ENCODE measurements at regions of chr5 and their contacts with region 1.

Region 1: GRCh38 chr5:53120165-53120564 is 10.6 kb upstream of the MOCS2 start:
- DNase-seq: peak in 2 of 4 experiments; percentile 32 to 55
- ATAC-seq: peak; percentile 69
- H3K4me3 ChIP-seq: no peak overlapping the region
- H3K27ac ChIP-seq: no peak overlapping the region
- H3K4me1 ChIP-seq: peaks cover 16 to 25% of the 10 kb centered on the region in 2 experiments; a peak in 4 of 5 replicates
- H3K27me3 ChIP-seq: no peaks in the 10 kb centered on the region
- CTCF ChIP-seq: no peak
- EP300 ChIP-seq: no peak; the same call in 1 of the 2 replicates
- POLR2A ChIP-seq: no peak
- RAD21 ChIP-seq: no peak

Region 2: DNA sequence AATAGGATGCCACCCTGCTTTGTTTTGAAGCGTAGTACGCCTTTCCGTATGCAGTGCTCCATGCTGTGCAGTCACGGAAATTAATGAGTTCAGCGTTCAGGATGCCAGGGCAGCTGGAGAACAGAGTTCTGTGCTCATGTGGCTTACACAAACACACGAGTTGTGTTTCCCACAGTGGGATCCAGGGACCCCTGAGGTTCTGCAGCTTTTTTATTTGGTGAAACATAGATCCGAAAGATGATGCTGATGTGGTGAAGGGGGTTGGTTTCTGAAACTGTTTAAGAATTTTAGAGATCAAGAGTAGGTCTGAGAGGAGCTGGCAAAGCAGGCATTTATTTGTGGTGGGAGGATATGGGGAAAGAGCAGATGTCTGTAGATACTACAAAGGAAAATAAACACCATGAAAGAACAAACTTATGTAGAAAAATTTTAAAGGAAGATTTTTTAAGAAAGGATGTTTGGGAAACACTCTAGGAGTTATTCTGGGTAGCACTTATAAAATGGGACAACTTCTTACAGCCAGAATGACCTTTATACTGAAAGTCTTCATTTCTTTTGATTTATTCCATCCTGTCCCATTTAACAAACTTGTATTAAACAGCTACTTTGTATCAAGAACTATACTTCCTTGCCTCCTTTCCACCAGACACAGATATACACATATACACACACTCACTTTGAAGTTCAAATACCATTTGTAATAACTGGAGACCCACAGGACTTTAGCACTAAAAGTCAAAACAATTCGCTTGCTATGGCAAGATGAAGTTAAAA is 279.7 kb before region 1 on chr5:
- CTCF ChIA-PET with region 1: no interaction called
- POLR2A ChIA-PET with region 1: no interaction called
- in situ Hi-C with region 1: no loop called
- intact Hi-C with region 1: no loop called
- DNase-seq: no peak
- ATAC-seq: no peak
- H3K4me3 ChIP-seq: no peak overlapping the region
- H3K27ac ChIP-seq: no peak overlapping the region
- H3K4me1 ChIP-seq: no peaks in the 10 kb centered on the region
- H3K27me3 ChIP-seq: 0 out of 5 replicates have a peak, but pooled peaks cover 0 to 2% of the 10 kb centered on the region in 2 experiments
- CTCF ChIP-seq: no peak
- EP300 ChIP-seq: no peak
- POLR2A ChIP-seq: no peak
- RAD21 ChIP-seq: no peak

Region 3: DNA sequence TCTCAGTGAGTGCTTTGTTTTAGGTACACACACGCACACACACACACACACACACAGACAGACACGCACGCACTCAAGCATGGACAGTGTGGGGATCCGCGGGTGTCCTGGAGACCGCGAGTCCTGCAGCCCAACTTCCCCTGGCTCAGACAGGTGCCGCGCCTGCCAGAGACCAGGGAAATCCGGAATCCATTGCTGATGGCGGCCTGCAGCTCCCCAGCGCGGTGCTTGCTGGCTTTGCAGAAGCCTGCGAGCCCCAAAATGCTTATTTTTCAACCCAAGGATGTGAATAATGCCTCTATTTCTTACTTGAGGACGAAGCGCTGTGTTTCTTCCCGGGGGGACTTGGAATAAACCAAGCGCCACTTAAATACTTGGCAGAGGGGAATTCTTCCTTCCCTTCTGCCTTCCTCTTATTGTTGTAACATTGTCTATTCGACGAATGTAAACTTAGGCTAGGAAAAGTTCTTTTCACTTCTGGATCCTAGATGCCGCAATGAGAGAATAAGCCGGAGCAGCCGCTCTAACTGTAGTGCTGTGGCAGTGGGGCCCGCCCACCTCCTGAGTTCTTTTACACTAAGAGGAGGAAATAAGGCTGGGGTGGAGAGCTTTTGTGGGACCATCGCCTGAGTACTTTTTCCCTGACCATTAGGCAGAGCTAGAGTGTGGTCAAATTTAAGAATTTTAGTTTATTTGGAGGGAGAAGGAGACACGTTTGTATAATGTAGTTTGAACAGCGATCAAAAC is 130.2 kb before region 1 on chr5:
- CTCF ChIA-PET with region 1: no interaction called
- POLR2A ChIA-PET with region 1: no interaction called
- in situ Hi-C with region 1: no loop called
- intact Hi-C with region 1: no loop called
- DNase-seq: no peak
- ATAC-seq: peak; percentile 56
- H3K4me3 ChIP-seq: no peak overlapping the region
- H3K27ac ChIP-seq: no peak overlapping the region
- H3K4me1 ChIP-seq: peaks cover 0 to 14% of the 10 kb centered on the region in 2 experiments; a peak in 2 of 5 replicates
- H3K27me3 ChIP-seq: peaks cover 17 to 21% of the 10 kb centered on the region in 2 experiments; a peak in 4 of 5 replicates
- CTCF ChIP-seq: 0 out of 6 replicates have a peak, but pooled peaks of 1 of the 3 experiments have one; percentile 4
- EP300 ChIP-seq: no peak
- POLR2A ChIP-seq: no peak
- RAD21 ChIP-seq: no peak

Region 4: DNA sequence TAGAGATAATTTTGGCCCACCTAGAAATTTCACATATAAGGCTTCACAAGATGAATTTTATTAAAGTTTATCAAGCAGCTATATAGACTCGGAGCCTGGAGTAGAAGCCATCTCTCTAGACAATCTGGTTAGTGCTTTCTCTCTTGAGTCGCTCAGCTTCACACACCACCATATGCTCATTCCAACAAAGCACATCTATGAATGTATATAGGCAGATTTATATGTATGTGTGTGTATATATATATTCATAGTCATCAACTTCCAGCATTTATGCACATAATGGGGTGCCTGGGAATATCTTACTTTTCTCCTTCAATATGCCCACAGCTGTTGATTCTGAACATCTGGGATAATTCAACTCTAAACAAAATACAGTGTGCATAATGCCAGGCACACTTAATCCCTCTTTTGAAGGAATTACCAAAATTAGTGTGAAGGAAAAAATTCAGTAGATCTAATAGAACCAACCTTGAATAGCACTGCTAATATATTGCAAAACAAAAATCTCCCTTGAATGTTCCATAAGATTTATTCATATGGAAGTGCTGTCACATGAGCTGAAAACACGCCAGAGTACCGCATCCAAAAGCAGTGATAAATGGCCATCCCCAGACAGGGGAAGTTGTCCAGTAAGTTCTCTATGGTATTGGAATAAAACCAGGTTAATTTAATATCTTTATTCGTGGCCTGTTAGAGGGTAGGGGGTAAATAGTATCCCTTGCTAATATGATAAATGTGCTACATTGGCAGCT is 45.4 kb after region 1 on chr5:
- CTCF ChIA-PET with region 1: no interaction called
- POLR2A ChIA-PET with region 1: no interaction called
- in situ Hi-C with region 1: no loop called
- intact Hi-C with region 1: loop called (anchors 1 kb)
- DNase-seq: no peak
- ATAC-seq: no peak
- H3K4me3 ChIP-seq: no peak overlapping the region
- H3K27ac ChIP-seq: no peak overlapping the region
- H3K4me1 ChIP-seq: no peaks in the 10 kb centered on the region
- H3K27me3 ChIP-seq: no peaks in the 10 kb centered on the region
- CTCF ChIP-seq: no peak
- EP300 ChIP-seq: no peak
- POLR2A ChIP-seq: no peak
- RAD21 ChIP-seq: no peak

Region 5: DNA sequence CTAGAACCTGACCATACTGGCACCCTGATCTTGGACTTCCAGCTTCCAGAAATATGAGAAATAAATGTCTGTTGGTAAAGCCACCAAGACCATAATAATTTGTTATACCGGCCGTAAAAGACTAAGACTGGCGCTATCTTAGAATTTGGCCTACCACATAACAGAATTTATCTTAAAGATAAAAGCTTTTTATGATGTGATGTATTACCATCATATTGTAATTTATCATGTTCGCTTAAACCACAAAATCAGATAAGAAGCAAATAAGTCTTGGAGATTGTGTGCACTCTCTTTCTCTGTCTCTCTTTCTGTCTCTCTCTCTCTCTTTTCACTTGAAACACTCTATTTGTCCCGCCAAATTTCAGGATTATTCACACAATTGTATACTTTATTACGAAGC is 395.8 kb after region 1 on chr5:
- CTCF ChIA-PET with region 1: no interaction called
- POLR2A ChIA-PET with region 1: no interaction called
- in situ Hi-C with region 1: no loop called
- intact Hi-C with region 1: no loop called
- DNase-seq: no peak
- ATAC-seq: no peak
- H3K4me3 ChIP-seq: no peak overlapping the region
- H3K27ac ChIP-seq: no peak overlapping the region
- H3K4me1 ChIP-seq: no peaks in the 10 kb centered on the region
- H3K27me3 ChIP-seq: no peaks in the 10 kb centered on the region; a peak in 1 of 5 replicates
- CTCF ChIP-seq: no peak
- EP300 ChIP-seq: no peak
- POLR2A ChIP-seq: no peak
- RAD21 ChIP-seq: no peak

Measured in K562 (cell line).